SK-N-SH (cell line): ENCODE measurements at regions of chr15 and their contacts with region 1.

Region 1: DNA sequence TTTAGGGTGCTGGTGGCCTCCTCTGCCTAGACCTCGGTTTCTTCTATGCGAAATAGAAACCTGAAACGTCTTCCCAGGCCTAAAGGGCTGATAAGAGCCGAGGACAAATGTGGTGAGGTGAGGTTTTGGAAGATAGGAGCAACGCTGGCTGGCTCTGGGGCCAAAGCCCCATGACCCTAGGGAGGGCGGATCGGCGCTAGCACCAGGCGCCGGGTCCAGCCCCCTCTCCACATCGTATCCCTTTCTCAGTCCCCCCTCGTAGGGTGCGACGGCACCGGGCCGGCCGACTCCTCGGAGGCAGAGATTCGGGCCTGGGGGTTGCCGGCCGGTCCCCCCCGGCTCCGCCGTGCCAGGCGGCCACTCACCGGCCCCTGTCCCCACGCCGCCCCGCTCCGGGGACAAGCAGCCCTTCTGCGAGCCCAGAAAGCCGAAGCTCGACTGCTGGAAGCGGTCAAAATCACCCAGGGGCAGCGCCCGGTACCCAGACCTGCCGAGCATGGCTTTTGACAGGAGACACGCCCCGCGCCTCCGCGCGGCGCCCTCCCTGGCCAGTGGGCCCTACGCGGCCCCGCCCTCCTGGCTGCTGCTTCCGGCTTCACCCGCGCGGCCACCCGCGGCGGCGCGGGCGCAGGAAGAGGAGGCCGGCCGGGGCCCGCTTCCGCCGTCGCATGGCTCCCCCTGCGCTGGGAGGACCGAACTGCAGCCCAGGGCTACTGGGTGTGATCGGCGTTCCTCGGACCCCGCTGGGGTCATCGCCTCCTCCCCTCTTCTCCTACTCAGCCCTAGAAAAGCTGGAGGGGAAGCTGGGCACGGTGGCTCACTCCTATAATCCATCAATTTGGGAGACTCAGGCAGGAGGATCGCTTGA is at the start of gene STOML1:
- DNase-seq: peak; percentile 99
- H3K4me3 ChIP-seq: peak within 1 kb of the TSS; percentile 71 to 83
- H3K27ac ChIP-seq: peak within 1 kb of the TSS; percentile 20 to 44; a peak in 3 of 4 replicates
- H3K4me1 ChIP-seq: peaks cover 36 to 50% of the 10 kb centered on the region in 2 experiments
- H3K27me3 ChIP-seq: no peaks in the 10 kb centered on the region
- CTCF ChIP-seq: peak; percentile 81
- EP300 ChIP-seq: peak in 1 of 2 experiments; percentile 40; a peak in 1 of 4 replicates
- RAD21 ChIP-seq: no peak
- polyA plus RNA-seq, gene STOML1: 19.1 and 20.4 TPM in 2 replicates

Region 2: DNA sequence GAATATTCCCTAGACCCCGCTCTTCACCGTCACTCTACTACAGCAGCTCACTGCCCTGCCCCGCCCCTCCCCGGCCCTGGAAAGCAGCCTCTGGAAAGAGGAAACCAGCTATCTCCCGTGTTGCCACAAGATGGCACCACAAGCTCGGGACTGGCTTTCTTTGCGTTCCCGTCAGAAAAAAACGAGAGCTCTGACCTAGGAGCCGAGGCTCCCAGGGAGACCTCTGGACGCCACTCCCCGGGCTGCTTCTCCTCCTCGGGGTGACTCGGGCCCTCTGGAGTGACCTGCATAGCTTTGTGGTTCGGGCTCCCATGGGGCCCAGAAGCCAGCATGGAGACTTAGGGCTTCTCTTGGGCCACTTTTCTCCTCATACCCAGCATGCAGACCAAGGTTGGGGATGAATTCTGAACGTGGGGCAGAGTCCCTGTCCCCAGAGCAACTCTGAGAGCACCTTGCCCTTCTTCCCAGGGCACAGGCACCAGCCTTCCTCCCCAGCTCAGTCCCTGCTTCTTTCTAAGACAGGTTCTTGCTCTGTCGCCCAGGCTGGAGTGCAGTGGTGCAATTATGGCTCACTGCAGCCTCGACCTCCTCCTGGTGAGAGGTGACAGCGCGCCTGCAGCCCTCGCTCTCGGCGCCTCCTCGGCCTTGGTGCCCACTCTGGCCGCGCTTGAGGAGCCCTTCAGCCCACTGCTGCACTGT is 18.8 kb before region 1 on chr15:
- CTCF ChIA-PET with region 1: interaction called, 37 read pairs
- POLR2A ChIA-PET with region 1: no interaction called
- DNase-seq: peak; percentile 93
- H3K4me3 ChIP-seq: peak overlapping the region in 1 of 2 experiments; percentile 50; a peak in 1 of 4 replicates
- H3K27ac ChIP-seq: no peak overlapping the region
- H3K4me1 ChIP-seq: peaks cover 8 to 10% of the 10 kb centered on the region in 2 experiments; a peak in 2 of 4 replicates
- H3K27me3 ChIP-seq: no peaks in the 10 kb centered on the region
- CTCF ChIP-seq: peak; percentile 84
- EP300 ChIP-seq: no peak
- RAD21 ChIP-seq: peak; percentile 97